ENCODE measurements at regions of chr12 and their contacts with region 1.

Region 1: GRCh38 chr12:100234598-100235304 is 32.1 kb downstream of the DEPDC4 start:
- DNase-seq: no peak
- H3K4me3 ChIP-seq: no peak overlapping the region
- H3K27ac ChIP-seq: peak overlapping the region in 1 of 4 donors; percentile 57
- H3K4me1 ChIP-seq: peaks cover 0 to 11% (median 7%) of the 10 kb centered on the region in 4 donors
- H3K27me3 ChIP-seq: no peaks in the 10 kb centered on the region
- CTCF ChIP-seq: peak; percentile 65 to 83 (median 68)
- EP300 ChIP-seq: no peak
- POLR2A ChIP-seq: no peak

Region 2: DNA sequence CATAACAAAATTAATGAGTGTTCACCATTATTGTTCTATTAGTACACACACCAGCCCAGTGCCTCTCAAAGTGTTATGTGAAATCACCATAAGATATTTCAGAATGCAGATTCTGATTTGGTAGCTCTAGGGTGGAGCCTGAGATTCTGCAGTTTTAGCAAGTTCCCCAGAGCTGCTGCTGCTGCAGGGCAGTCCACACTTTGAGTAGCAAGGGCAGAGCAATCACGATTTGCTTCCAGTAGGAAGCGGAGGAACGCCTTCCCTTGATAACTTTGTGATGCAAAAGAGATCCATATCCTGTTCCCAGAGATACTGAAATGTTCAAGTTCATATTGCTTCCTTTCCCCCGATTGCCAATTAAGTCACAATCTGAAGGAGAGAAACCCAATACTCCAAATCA is 180.0 kb after region 1 on chr12:
- intact Hi-C with region 1: no loop called
- DNase-seq: no peak
- H3K4me3 ChIP-seq: no peak overlapping the region
- H3K27ac ChIP-seq: no peak overlapping the region
- H3K4me1 ChIP-seq: peaks cover 0 to 4% (median 0%) of the 10 kb centered on the region in 4 donors
- H3K27me3 ChIP-seq: no peaks in the 10 kb centered on the region
- CTCF ChIP-seq: no peak
- EP300 ChIP-seq: no peak
- POLR2A ChIP-seq: no peak

Region 3: GRCh38 chr12:100554608-100555077 is 319.9 kb after region 1 on chr12:
- intact Hi-C with region 1: loop called (anchors 5 kb)
- DNase-seq: no peak
- H3K4me3 ChIP-seq: no peak overlapping the region
- H3K27ac ChIP-seq: no peak overlapping the region
- H3K4me1 ChIP-seq: peaks cover 0 to 7% (median 3%) of the 10 kb centered on the region in 4 donors
- H3K27me3 ChIP-seq: no peaks in the 10 kb centered on the region
- CTCF ChIP-seq: peak; percentile 70 to 83 (median 79)
- EP300 ChIP-seq: no peak
- POLR2A ChIP-seq: no peak